ENCODE measurements at regions of chr2 and their contacts with region 1.

Region 1: GRCh38 chr2:187499941-187500532 is 52.0 kb upstream of the CALCRL start:
- DNase-seq: peak; percentile 42 to 48
- ATAC-seq: peak; percentile 78 to 92 (median 82)
- H3K4me3 ChIP-seq: no peak overlapping the region
- H3K27ac ChIP-seq: no peak overlapping the region
- H3K4me1 ChIP-seq: peaks cover 4% of the 10 kb centered on the region
- H3K27me3 ChIP-seq: no peaks in the 10 kb centered on the region
- CTCF ChIP-seq: peak; percentile 88

Region 2: DNA sequence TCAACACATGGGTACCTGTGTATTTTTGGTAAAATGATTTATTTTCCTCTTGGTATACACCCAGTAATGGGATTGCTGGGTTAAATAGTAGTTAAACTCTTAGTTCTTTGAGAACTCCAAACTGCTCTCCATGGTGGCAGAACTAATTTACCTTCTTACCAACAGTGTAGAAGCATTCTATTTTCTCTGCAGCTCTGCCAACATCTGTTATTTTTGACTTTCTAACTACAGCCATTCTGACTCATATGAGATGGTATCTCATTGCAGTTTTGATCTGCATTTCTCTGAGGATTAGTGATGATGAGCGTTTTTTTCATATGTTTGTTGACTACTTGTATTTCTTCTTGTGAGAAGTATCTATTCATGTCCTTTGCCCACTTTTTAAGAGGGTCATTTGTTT is 1580.9 kb before region 1 on chr2:
- intact Hi-C with region 1: no loop called
- DNase-seq: no peak
- ATAC-seq: no peak
- H3K4me3 ChIP-seq: no peak overlapping the region
- H3K27ac ChIP-seq: no peak overlapping the region
- H3K4me1 ChIP-seq: no peaks in the 10 kb centered on the region
- H3K27me3 ChIP-seq: no peaks in the 10 kb centered on the region
- CTCF ChIP-seq: no peak

Region 3: GRCh38 chr2:186991766-186992417 is 508.1 kb before region 1 on chr2:
- intact Hi-C with region 1: no loop called
- DNase-seq: no peak
- ATAC-seq: no peak
- H3K4me3 ChIP-seq: no peak overlapping the region
- H3K27ac ChIP-seq: no peak overlapping the region
- H3K4me1 ChIP-seq: no peaks in the 10 kb centered on the region
- H3K27me3 ChIP-seq: no peaks in the 10 kb centered on the region
- CTCF ChIP-seq: no peak

Region 4: GRCh38 chr2:187442378-187442777 is 57.7 kb before region 1 on chr2:
- intact Hi-C with region 1: no loop called
- DNase-seq: no peak
- ATAC-seq: no peak
- H3K4me3 ChIP-seq: no peak overlapping the region
- H3K27ac ChIP-seq: no peak overlapping the region
- H3K4me1 ChIP-seq: no peaks in the 10 kb centered on the region
- H3K27me3 ChIP-seq: no peaks in the 10 kb centered on the region
- CTCF ChIP-seq: no peak

Region 5: GRCh38 chr2:187842978-187843847 is 343.2 kb after region 1 on chr2:
- intact Hi-C with region 1: loop called in 1 of 2 experiments (anchors 5 kb)
- DNase-seq: no peak
- ATAC-seq: no peak
- H3K4me3 ChIP-seq: no peak overlapping the region
- H3K27ac ChIP-seq: no peak overlapping the region
- H3K4me1 ChIP-seq: no peaks in the 10 kb centered on the region
- H3K27me3 ChIP-seq: no peaks in the 10 kb centered on the region
- CTCF ChIP-seq: peak; percentile 61